ENCODE measurements at regions of chr10 and their contacts with region 1.

Region 1: GRCh38 chr10:42177077-42177792 is 461.1 kb downstream of the ZNF33B start:
- DNase-seq: no peak
- ATAC-seq: no peak

Region 2: GRCh38 chr10:42428534-42428933 is 251.3 kb after region 1 on chr10:
- intact Hi-C with region 1: loop called (anchors 10 kb)
- DNase-seq: no peak
- ATAC-seq: no peak

Region 3: GRCh38 chr10:42638055-42638820 is 461.0 kb after region 1 on chr10 and contains the start of gene ZNF33B:
- intact Hi-C with region 1: no loop called
- DNase-seq: peak; percentile 96
- ATAC-seq: peak; percentile 99
- total RNA-seq, gene ZNF33B: 14.0 TPM

Measured in Right ventricle myocardium superior (tissue), 1 donor.